Body of pancreas (tissue), 4 donors: ENCODE measurements at regions of chr10 and their contacts with region 1.

Region 1: DNA sequence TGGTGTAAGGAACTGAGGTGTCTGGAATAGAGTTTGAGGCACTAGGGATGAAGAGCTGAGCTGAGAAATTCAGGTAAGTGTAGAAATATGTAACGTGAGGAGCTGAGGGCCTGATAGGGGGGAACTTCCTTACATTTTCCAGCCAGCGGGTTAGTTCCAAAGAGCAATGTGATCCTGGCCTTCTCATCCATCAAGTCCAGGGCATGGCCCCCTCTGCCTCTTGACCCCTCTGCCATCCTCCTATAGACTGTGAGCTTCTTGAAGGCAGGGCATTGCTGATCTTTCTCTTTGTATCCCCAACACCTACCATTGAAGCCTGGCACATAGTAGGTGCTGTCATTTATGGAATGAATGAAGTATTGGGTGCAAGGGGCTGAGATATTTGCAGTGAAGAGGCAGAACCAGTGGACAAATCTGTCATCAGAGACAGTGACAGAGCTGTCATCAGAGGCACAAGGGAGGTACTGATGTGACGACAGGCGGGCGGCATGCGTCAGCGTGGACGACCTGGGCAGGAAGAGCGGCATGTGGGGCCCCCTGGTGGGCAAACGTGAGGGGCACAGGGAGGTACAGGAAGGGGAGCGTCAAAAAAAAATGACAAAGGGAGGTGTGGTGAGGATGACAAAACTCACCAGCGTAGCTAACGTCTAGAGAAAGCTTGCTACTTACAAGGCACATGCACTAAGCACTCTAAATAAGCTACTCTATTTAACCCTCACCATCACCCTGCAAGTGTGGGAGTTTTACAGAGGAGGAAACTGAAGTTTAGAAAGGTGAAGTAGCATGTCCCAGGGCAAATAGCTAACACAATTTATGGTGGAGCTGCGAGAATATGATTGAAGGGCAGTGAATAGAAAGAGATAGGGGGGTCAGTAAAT is 5.2 kb upstream of the CAMK2G start:
- DNase-seq: peak; percentile 84 to 89 (median 86)
- ATAC-seq: peak; percentile 89
- H3K4me3 ChIP-seq: no peak overlapping the region
- H3K27ac ChIP-seq: no peak overlapping the region
- H3K4me1 ChIP-seq: peaks cover 9% of the 10 kb centered on the region
- H3K27me3 ChIP-seq: no peaks in the 10 kb centered on the region
- CTCF ChIP-seq: peak; percentile 77 to 98 (median 96)
- POLR2A ChIP-seq: no peak

Region 2: GRCh38 chr10:73848821-73849489 is 30.6 kb before region 1 on chr10:
- intact Hi-C with region 1: loop called (anchors 5 kb)
- DNase-seq: peak; percentile 82 to 89 (median 87)
- ATAC-seq: peak; percentile 90
- H3K4me3 ChIP-seq: no peak overlapping the region
- H3K27ac ChIP-seq: no peak overlapping the region
- H3K4me1 ChIP-seq: no peaks in the 10 kb centered on the region
- H3K27me3 ChIP-seq: no peaks in the 10 kb centered on the region
- CTCF ChIP-seq: peak; percentile 92 to 100 (median 97)
- POLR2A ChIP-seq: no peak

Region 3: DNA sequence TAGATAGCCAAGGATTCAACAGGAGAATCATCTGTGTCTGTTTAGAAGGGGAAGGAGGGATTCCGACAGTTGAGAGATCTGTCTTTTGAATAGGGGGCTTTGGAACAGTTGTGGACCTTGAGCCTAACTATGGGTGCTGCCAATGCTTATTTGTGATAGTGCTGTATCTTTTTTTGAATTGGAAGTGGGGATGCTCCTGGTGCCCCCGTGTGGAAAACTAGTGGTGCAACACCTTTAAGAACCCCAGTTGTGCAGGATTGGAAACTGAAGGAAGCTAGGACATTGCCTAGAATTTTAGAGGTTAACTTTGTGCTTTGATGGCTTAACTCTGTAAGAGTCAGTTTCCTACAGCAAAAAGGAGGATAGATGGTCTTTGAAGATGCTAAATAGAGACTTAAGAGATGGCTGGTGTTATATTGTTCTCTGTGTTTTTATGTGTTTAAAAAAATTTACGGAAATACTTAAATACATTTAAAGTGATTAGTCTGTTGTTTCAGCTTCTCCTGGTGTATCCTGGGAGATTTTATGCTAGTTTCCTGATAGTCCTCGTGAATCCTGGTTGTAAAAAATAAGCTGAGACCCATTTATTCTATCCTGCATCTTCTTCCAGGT is 201.8 kb after region 1 on chr10:
- intact Hi-C with region 1: loop called (anchors 10 kb)
- DNase-seq: peak; percentile 35 to 57 (median 42)
- ATAC-seq: peak; percentile 65
- H3K4me3 ChIP-seq: no peak overlapping the region
- H3K27ac ChIP-seq: no peak overlapping the region
- H3K4me1 ChIP-seq: no peaks in the 10 kb centered on the region
- H3K27me3 ChIP-seq: no peaks in the 10 kb centered on the region
- CTCF ChIP-seq: peak; percentile 20 to 70 (median 64)
- POLR2A ChIP-seq: no peak

Region 4: GRCh38 chr10:74394416-74394969 is 515.0 kb after region 1 on chr10:
- intact Hi-C with region 1: no loop called
- DNase-seq: no peak
- ATAC-seq: no peak
- H3K4me3 ChIP-seq: no peak overlapping the region
- H3K27ac ChIP-seq: no peak overlapping the region
- H3K4me1 ChIP-seq: no peaks in the 10 kb centered on the region
- H3K27me3 ChIP-seq: no peaks in the 10 kb centered on the region
- CTCF ChIP-seq: no peak
- POLR2A ChIP-seq: no peak